ENCODE measurements at regions of chr10 and their contacts with region 1.

Region 1: GRCh38 chr10:91163269-91163868 is 57.1 kb upstream of the PCGF5 start:
- DNase-seq: peak; percentile 56
- H3K4me3 Mint-ChIP-seq: peak overlapping the region; percentile 80
- H3K27ac Mint-ChIP-seq: peak overlapping the region; percentile 64
- H3K4me1 Mint-ChIP-seq: peaks cover 13% of the 10 kb centered on the region
- H3K27me3 Mint-ChIP-seq: no peaks in the 10 kb centered on the region
- CTCF ChIP-seq: no peak

Region 2: DNA sequence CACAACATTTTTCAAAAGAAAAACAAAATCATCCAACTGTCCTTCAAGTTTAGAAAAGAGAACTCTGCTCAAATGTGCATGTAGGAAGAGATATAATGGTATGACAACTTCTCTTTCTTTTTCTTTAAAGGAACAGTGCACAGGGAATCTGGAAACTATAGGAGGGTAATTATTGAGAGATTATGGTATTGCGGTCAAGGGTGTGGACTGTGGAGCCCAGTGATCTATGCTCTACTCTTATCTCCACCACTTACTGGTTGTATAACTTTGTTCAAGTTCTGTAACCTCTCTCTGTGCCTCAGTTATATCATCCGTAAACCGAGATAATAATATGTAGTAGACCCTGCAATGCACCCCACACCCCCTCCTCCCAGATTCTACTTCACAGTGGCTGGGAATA is 12.7 kb before region 1 on chr10:
- CTCF ChIA-PET with region 1: no interaction called
- POLR2A ChIA-PET with region 1: interaction called, 12 read pairs
- intact Hi-C with region 1: no loop called
- DNase-seq: no peak
- H3K4me3 Mint-ChIP-seq: no peak overlapping the region
- H3K27ac Mint-ChIP-seq: no peak overlapping the region
- H3K4me1 Mint-ChIP-seq: no peaks in the 10 kb centered on the region
- H3K27me3 Mint-ChIP-seq: no peaks in the 10 kb centered on the region
- CTCF ChIP-seq: no peak

Region 3: DNA sequence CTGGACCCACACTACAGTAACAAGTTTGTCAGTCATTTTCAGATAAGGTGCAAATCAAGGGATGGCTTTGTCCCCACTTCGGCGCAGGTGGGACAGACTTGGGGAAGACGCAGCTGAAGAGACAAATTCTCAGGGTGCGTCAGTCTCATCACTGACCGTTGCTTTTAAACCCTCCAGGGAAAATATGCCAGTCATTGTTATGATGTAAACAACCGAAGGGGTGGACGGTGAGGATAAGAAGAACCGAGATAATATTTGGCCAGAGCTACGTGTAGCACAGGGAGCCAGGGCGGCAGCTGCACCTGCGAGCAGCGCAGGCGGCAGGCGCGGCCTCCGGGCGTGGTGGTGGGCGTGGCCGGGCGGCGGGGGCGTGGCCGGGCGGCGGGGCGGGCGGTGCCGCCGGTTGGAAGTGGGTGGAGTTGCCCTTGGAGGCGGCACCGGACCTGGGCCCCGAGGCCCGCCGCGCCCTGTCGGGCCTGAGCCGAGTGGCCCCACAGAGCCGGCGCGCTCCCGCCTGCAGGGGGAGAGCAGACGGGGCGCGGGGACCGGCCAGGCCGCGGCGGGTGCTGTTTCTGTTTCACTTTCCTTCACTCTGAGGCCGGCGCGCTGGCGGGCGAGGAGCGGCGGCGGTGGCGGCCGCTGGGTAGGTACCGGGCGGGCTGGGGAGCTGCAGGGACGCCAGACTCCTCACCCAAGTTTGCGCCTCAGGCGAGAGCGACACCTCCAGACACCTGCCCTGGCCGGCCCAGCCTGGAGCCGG is 57.0 kb after region 1 on chr10 and contains the start of gene PCGF5:
- CTCF ChIA-PET with region 1: interaction called, 3 read pairs
- POLR2A ChIA-PET with region 1: interaction called, 7 read pairs
- intact Hi-C with region 1: loop called (anchors 1 kb)
- DNase-seq: peak; percentile 89
- H3K4me3 Mint-ChIP-seq: peak within 1 kb of the TSS; percentile 79
- H3K27ac Mint-ChIP-seq: peak within 1 kb of the TSS; percentile 80
- H3K4me1 Mint-ChIP-seq: peaks cover 22% of the 10 kb centered on the region
- H3K27me3 Mint-ChIP-seq: no peaks in the 10 kb centered on the region
- CTCF ChIP-seq: peak; percentile 9
- total RNA-seq, gene PCGF5: 25.8 and 34.6 TPM in 2 replicates